ENCODE measurements at regions of chr2 and their contacts with region 1.

Region 1: DNA sequence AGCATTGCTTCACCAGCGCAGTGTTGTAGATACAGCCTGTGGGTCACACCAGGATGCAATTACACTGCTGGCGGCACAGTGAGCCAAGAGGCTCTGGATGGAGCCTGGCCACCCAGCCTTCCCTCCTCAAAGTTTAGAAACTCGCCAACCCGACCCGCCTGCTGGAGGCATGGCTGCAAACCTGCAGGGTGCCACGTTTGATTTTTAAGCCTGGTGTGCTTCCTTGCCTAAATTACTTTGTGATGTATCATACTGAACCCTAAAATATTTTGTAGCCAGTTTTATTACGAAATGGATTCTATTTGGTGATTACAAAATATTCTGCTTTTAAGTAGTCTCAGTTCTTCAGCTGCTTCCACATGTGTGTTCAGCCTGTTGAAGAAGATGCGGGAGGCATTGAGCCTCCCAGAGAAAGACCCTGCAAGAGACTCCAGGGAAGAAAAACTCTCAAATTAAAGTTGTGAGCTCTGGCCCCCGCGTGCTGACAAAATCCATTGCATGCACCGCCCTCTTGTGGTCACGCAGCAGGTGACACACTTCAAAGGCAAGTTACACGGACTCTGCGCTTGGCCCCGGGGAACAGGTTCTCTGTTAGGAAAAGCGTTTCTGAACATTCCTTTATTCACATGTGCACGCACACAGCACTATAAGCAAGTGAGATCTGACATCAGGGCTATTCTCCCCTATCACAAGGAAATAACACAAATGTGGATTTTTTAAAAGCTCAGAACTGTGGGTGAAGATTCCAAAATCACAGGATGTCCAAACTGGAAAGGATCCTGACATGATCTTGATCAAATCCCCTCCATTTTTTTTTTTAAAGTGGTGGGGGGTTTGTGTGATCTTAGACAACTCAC is 63.0 kb upstream of the TWIST2 start:
- DNase-seq: peak in 1 of 2 experiments; percentile 68
- H3K4me3 ChIP-seq: no peak overlapping the region
- H3K27ac ChIP-seq: no peak overlapping the region
- H3K4me1 ChIP-seq: no peaks in the 10 kb centered on the region
- H3K27me3 ChIP-seq: peaks cover 83% of the 10 kb centered on the region
- CTCF ChIP-seq: peak; percentile 98

Region 2: DNA sequence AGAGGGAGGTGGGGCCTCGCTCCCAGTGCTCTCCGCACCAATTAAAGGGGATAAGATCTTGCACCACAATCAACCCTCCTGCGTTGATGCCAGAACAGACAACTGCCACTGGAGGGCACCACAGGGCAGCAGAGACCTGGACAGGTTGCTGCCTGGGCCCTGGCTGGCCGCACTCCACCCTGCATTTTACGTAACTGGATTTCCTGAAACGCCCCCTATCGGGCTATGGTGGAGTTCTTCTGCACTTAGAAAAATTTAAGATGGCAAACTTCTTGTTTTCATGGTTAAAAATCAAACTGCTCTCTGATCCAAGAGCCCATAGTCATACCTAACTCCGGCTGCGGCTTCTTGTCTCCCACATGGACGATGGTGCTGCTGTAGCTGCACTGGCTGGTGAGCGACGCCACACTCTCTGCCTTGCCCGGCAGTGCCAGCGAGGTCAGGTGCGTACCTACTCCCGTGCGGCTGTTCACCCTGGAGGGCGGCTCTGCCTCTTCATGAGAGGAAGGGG is 528.2 kb before region 1 on chr2:
- CTCF ChIA-PET with region 1: no interaction called
- POLR2A ChIA-PET with region 1: no interaction called
- intact Hi-C with region 1: loop called (anchors 1 kb)
- DNase-seq: peak; percentile 84 to 96
- H3K4me3 ChIP-seq: no peak overlapping the region
- H3K27ac ChIP-seq: no peak overlapping the region
- H3K4me1 ChIP-seq: 0 out of 2 replicates have a peak, but pooled peaks cover 5% of the 10 kb centered on the region
- H3K27me3 ChIP-seq: no peaks in the 10 kb centered on the region
- CTCF ChIP-seq: peak; percentile 99

Region 3: GRCh38 chr2:238362626-238363025 is 422.3 kb before region 1 on chr2:
- CTCF ChIA-PET with region 1: interaction called, 12 read pairs
- POLR2A ChIA-PET with region 1: no interaction called
- intact Hi-C with region 1: loop called (anchors 1 kb)
- DNase-seq: no peak
- H3K4me3 ChIP-seq: no peak overlapping the region
- H3K27ac ChIP-seq: no peak overlapping the region
- H3K4me1 ChIP-seq: no peaks in the 10 kb centered on the region
- H3K27me3 ChIP-seq: no peaks in the 10 kb centered on the region
- CTCF ChIP-seq: no peak

Region 4: GRCh38 chr2:238370823-238371372 is 414.0 kb before region 1 on chr2:
- CTCF ChIA-PET with region 1: interaction called, 6 read pairs
- POLR2A ChIA-PET with region 1: no interaction called
- intact Hi-C with region 1: loop called (anchors 1 kb)
- DNase-seq: peak in 1 of 2 experiments; percentile 58
- H3K4me3 ChIP-seq: no peak overlapping the region
- H3K27ac ChIP-seq: no peak overlapping the region
- H3K4me1 ChIP-seq: no peaks in the 10 kb centered on the region
- H3K27me3 ChIP-seq: no peaks in the 10 kb centered on the region
- CTCF ChIP-seq: peak; percentile 71

Region 5: GRCh38 chr2:238513346-238513745 is 271.6 kb before region 1 on chr2:
- CTCF ChIA-PET with region 1: interaction called, 10 read pairs
- POLR2A ChIA-PET with region 1: no interaction called
- intact Hi-C with region 1: loop called (anchors 1 kb)
- DNase-seq: peak in 1 of 2 experiments; percentile 62
- H3K4me3 ChIP-seq: no peak overlapping the region
- H3K27ac ChIP-seq: no peak overlapping the region
- H3K4me1 ChIP-seq: no peaks in the 10 kb centered on the region
- H3K27me3 ChIP-seq: peaks cover 76% of the 10 kb centered on the region
- CTCF ChIP-seq: peak; percentile 77

Region 6: GRCh38 chr2:238657132-238658053 is 127.5 kb before region 1 on chr2:
- CTCF ChIA-PET with region 1: no interaction called
- POLR2A ChIA-PET with region 1: no interaction called
- intact Hi-C with region 1: no loop called
- DNase-seq: no peak
- H3K4me3 ChIP-seq: no peak overlapping the region
- H3K27ac ChIP-seq: no peak overlapping the region
- H3K4me1 ChIP-seq: no peaks in the 10 kb centered on the region
- H3K27me3 ChIP-seq: peaks cover 21% of the 10 kb centered on the region
- CTCF ChIP-seq: no peak

Region 7: GRCh38 chr2:238684362-238685326 is 100.3 kb before region 1 on chr2:
- CTCF ChIA-PET with region 1: no interaction called
- POLR2A ChIA-PET with region 1: no interaction called
- intact Hi-C with region 1: no loop called
- DNase-seq: peak; percentile 79 to 94
- H3K4me3 ChIP-seq: no peak overlapping the region
- H3K27ac ChIP-seq: peak overlapping the region; percentile 73
- H3K4me1 ChIP-seq: peaks cover 32% of the 10 kb centered on the region
- H3K27me3 ChIP-seq: peaks cover 13% of the 10 kb centered on the region
- CTCF ChIP-seq: no peak

Region 8: DNA sequence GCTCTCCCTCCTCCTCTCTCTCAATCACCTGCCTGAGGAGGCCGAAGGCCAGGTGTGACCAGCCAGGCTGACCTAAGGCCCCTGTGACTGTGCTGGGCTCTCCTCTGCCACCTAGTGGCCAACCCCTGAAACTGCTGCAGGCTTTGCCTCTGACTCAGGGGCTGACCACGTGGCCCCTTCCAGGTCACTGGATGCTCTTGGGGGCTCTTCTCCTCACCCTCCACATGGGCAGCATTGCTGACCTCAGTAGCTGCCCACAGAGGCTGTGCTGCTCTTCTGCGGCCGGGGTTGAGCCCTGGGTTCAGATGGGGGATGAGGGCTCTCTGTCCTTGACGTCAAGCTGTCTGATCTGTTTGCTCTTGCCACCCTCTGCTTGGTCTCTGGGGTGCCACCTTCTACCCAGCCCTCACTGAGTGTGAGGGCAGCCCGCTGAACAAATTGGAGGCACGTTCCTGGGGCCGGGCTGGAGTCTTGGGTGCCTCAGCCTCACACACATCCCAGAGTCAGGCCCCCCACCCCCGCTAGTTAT is 185.7 kb after region 1 on chr2:
- CTCF ChIA-PET with region 1: no interaction called
- POLR2A ChIA-PET with region 1: no interaction called
- intact Hi-C with region 1: loop called (anchors 1 kb)
- DNase-seq: peak in 1 of 2 experiments; percentile 84
- H3K4me3 ChIP-seq: no peak overlapping the region
- H3K27ac ChIP-seq: no peak overlapping the region
- H3K4me1 ChIP-seq: no peaks in the 10 kb centered on the region
- H3K27me3 ChIP-seq: peaks cover 45% of the 10 kb centered on the region
- CTCF ChIP-seq: peak; percentile 100

Region 9: DNA sequence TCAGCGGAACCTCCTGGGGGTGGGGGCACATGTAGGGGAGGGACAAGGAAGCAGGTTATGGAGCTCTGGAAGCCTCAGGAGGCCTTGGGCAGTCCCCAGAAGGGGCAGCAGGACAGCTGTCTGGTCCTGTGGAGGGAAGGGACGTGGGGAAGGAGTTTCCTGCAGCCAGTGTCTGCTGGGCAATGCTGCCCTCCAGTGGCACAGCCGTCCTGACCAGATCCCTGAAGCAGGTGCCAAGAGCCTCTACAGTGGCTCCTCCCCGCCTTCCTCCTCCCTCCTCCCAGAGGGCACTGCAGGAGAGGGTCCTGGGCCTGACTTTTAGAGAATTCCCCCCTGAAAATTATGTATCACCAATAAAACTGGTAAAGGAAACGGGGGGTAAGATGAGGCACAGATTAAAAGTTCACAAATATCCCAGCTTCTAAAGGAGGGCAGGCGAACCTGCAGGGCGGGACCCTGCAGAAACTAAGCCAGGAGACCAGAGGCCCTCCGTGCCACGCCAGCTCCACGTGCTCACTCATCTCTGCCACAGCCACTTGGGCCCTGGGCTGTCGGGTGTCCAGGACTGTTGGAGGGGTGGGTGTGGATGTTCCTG is 321.5 kb after region 1 on chr2:
- CTCF ChIA-PET with region 1: no interaction called
- POLR2A ChIA-PET with region 1: no interaction called
- intact Hi-C with region 1: loop called (anchors 2 kb)
- DNase-seq: peak; percentile 50 to 72
- H3K4me3 ChIP-seq: no peak overlapping the region
- H3K27ac ChIP-seq: no peak overlapping the region
- H3K4me1 ChIP-seq: no peaks in the 10 kb centered on the region
- H3K27me3 ChIP-seq: no peaks in the 10 kb centered on the region
- CTCF ChIP-seq: peak; percentile 82